Dendritic cell treated with granulocyte-macrophage colony-stimulating factor and Interleukin-4, amounts not matched to agents 40 ng/mL and 50 ng/mL, for 4 days (primary cell): ENCODE measurements at regions of chr19 and their contacts with region 1.

Region 1: DNA sequence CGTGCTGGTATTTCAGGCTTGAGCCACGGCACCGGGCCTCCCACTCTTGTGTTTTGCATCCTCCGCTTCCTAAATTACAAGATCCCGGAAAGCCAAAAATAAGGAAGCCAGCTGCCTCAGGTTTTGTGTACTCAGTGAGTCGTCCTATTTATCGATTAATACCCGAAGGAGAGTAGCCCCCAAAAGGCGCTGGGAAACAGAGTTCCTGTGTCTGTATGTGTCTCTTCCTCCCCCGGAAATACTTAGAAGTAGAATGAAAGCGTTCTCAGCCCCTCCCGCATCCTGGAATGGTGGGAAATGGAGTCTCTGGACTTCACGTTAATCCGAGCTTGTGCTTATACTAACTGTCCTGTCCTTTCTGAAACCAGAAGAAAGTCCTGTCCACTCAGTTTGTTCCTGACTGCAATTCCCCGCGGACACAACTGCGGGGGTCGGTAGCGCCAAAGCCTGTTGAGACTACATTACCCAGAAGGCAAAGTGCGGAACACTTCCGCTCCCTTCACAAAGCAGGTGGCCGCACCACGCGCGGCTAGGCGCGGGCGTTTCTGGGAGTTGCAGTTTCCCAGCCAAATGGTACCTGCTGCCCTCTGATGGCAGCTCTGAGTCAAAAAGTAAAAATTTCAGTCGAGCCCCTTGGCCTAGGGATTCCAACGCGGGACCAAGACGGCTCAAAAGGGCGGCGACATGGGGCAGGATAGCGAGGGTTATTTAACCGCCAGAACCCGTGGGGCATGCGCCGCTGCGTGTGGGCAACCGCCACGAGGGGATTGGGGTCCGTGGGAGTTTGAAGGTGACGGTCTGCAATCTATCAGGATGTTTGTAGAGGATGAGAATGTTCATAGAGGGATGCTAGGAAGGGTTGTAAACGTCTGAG is 2.2 kb upstream of the GSK3A start:
- H3K4me3 Mint-ChIP-seq: peak overlapping the region; percentile 91
- H3K27ac Mint-ChIP-seq: peak overlapping the region; percentile 91
- H3K4me1 Mint-ChIP-seq: peaks cover 53% of the 10 kb centered on the region
- H3K27me3 Mint-ChIP-seq: no peaks in the 10 kb centered on the region

Region 2: DNA sequence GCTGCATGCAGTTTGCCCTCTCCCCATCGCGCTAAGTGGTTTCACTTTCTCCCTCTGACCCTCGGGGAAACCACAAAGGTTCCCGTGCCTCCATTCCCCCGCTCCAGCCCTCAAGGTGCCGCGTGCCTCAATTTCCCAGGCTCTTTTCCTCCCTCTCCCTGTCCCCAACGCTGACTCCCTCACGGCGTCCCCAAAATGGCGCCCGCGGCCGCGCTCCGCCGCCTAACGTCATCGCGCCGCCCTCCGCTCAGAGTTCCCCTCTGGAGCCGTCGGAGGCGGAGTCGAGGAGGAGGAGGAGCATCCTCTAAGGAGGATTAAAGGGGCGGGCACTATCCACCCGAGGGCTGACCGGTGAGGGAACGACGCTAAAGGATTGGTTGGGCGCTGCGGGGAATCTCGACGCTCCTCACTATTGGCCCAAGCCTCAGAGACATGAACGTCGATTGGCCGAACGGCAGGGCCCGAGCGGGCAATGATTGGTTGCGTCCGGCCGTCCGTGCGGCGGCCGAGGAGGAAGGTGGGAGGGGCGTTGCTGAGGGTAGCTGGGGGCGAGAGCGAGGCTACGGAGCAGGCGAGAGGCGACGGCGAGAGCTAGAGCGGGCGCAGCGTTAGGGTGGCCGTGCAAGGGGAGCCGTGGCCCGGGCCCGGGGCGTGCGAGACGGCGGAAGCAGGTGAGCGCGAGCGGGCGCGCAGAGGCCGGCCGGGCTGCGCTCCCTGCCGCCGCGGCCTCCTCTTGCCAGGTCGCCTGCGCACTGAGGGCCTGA is 168.8 kb before region 1 on chr19 and contains the start of gene ZNF574:
- intact Hi-C with region 1: loop called (anchors 1 kb)
- H3K4me3 Mint-ChIP-seq: peak within 1 kb of the TSS; percentile 98
- H3K27ac Mint-ChIP-seq: peak within 1 kb of the TSS; percentile 99
- H3K4me1 Mint-ChIP-seq: peaks cover 32% of the 10 kb centered on the region
- H3K27me3 Mint-ChIP-seq: peaks cover 5% of the 10 kb centered on the region

Region 3: GRCh38 chr19:42132851-42133528 is 111.6 kb before region 1 on chr19:
- intact Hi-C with region 1: loop called (anchors 2 kb)
- H3K4me3 Mint-ChIP-seq: peak overlapping the region; percentile 89
- H3K27ac Mint-ChIP-seq: peak overlapping the region; percentile 58
- H3K4me1 Mint-ChIP-seq: peaks cover 65% of the 10 kb centered on the region
- H3K27me3 Mint-ChIP-seq: no peaks in the 10 kb centered on the region

Region 4: DNA sequence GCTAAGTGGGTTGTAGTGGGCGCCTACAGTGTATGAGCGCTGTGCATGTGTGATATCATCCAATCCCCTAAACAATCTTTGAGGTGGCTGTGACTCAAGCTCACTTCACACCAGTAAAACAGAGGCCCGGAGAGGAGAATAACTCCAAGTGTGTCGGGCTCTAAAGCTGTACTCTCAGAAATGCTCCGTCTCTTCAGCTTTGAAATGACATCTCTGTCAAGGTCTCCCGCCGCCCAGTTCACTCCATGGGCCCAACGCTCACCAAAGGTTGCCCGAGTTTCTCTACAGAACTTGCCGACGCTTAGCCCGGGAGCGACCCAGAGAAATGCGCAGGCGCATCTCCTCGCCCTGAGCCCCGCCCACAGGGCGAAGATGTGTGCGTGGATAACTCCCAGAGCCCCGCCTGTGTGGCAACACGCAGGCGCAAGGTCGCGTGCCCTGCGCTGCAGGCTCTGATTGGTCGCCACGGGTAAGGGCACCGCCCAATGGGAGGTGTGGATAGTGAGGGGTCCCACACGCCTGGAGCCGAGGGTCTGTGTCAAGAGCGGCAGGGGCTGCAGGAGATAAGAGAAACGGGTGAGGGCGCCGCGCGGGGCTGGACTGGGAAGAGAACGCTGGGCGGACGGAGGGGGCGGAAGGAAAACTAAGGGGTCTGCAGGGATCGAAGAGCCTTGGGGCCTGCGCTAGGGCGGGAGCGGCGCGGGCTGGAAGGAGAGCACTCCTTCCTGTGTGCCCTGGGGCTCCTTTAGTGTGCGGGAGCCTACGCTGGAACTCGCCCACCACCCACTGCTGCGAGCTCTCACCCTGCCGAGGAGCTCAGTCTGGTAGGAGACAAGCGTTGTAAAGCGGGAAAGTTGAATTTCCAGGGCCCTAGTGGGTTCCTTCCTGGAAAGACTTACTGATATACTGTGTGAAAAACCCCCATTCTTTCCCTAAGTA is 24.5 kb before region 1 on chr19 and contains the start of gene ZNF526:
- intact Hi-C with region 1: loop called (anchors 1 kb)
- H3K4me3 Mint-ChIP-seq: peak within 1 kb of the TSS; percentile 94
- H3K27ac Mint-ChIP-seq: peak within 1 kb of the TSS; percentile 85
- H3K4me1 Mint-ChIP-seq: peaks cover 55% of the 10 kb centered on the region
- H3K27me3 Mint-ChIP-seq: no peaks in the 10 kb centered on the region